Left cardiac atrium (tissue), 4 donors: ENCODE measurements at regions of chr16 and their contacts with region 1.

Region 1: GRCh38 chr16:23286131-23286532 is 16.0 kb upstream of the SCNN1B start:
- DNase-seq: no peak
- ATAC-seq: no peak

Region 2: DNA sequence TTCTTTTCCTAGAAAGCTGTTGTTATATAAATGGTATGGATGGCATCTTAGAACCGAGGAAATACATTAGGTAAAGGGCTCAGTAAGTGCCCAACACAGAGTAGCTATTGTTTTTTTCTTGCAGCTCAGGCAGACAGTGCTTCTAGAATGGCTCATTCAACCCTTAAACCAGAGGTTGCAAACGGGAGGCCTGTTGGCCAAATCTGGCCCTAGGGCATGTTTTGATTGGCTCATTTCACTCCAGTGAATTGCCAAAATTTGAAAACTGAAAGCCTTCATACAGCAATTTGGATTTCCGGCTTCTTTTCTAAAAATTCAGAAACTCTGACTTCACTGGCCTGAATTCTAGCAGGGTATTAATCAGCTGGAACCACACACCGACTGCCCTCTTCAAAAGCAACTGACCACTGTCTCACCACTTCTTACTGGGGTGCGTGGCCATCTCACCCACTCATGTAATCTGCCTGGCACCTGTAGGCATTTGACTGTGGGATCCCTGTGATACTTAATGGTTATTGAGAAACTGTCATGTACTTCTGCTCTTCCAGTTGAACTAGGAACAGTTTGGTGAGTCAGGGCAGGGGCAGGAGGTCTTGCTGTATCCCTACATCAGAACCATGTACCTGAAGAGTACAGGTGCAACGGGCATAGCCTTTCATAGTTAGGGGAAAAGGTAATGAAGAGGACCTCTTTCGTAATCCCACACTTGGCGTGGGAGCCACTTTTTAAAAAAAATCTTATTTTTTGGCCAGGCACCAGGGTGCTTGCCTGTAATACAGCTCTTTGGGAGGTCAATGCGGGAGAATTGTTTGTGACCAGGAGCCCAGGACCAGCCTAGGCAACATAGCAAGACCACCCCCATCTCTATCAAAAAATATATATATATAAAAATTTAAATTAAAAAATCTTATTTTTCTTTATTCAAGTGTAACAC is 37.6 kb before region 1 on chr16:
- intact Hi-C with region 1: no loop called
- DNase-seq: no peak
- ATAC-seq: peak; percentile 75 to 91

Region 3: GRCh38 chr16:23334457-23334853 is 48.3 kb after region 1 on chr16:
- intact Hi-C with region 1: loop called in 1 of 2 experiments (anchors 10 kb)
- DNase-seq: no peak
- ATAC-seq: no peak

Region 4: DNA sequence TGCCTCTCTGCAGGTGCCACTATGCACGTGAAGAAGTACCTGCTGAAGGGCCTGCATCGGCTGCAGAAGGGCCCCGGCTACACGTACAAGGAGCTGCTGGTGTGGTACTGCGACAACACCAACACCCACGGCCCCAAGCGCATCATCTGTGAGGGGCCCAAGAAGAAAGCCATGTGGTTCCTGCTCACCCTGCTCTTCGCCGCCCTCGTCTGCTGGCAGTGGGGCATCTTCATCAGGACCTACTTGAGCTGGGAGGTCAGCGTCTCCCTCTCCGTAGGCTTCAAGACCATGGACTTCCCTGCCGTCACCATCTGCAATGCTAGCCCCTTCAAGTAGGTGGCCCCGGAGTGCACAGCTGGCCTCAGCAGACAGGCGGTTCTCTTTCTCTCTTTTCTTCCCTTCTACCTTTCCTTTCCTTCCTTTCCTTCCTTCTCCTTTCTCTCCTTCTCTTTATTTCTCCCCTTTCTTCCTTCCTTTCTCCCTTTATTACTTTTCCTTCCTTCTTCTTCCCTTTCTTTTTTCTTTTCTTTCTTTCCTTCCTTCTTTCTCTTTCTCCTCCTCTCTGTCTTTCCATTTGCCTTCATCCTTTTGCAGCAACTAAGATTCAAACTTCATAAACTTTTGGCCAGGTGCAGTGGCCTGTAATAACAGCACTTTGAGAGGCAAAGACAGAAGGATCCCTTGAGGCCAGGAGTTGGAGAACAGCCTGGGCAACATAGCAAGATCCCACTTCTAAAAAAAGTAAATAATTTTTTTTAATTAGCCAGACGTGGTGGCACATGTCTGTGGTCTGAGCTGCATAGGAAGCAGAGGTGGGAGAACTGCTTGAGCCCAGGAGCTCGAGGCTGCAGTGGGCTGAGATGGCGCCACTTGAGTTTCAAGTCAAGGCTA is 62.7 kb after region 1 on chr16:
- intact Hi-C with region 1: no loop called
- DNase-seq: no peak
- ATAC-seq: no peak

Region 5: DNA sequence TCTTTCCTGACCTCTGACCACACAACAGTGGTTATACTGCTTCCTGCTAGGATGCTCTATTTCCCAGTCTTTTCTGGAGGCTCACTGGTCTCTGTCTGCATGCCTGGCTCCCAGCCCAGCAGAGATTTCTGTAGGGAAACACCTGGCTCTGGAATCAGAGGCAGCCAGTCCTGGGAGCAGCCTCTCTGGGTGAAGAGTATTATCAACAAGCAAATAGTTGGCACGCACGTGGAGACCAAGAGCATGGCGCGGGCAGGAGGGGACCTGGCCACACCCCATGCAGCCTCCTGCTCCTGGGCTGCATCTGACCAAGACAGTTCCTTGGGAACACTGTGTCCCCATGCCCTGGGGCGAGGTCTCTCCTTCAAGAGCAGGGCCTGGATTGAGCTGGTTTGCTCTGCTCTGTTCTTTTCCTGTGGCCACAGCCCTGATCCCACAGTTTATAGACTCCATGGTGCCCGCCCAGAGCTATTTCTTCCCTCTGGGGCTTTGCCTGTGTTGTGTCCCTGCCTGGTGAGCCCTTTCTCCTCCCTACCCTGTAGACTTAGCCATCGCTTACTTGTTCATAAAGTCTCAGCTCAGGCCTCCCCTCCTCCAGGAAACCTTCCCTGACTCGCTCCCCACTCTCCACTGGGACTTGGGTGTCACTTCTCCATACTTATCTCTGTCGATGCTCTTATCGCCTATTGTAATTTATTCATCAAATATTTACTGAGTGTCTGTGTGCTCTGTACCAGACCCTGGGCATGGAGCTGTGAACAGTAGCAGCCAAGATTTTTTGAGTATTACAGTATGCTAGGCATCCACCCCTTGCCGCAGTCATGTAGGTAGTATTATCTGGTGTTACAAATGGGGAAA is 76.6 kb after region 1 on chr16:
- intact Hi-C with region 1: no loop called
- DNase-seq: no peak
- ATAC-seq: peak; percentile 44 to 65